Thyroid gland (tissue), 4 donors: ENCODE measurements at regions of chr5 and their contacts with region 1.

Region 1: GRCh38 chr5:32092938-32093812 is 80.9 kb downstream of the GOLPH3 start:
- DNase-seq: peak; percentile 66 to 70
- H3K4me3 ChIP-seq: no peak overlapping the region
- H3K27ac ChIP-seq: no peak overlapping the region
- H3K4me1 ChIP-seq: peaks cover 0 to 5% of the 10 kb centered on the region in 2 donors
- H3K27me3 ChIP-seq: no peaks in the 10 kb centered on the region
- CTCF ChIP-seq: peak; percentile 40 to 92 (median 76)
- POLR2A ChIP-seq: no peak

Region 2: DNA sequence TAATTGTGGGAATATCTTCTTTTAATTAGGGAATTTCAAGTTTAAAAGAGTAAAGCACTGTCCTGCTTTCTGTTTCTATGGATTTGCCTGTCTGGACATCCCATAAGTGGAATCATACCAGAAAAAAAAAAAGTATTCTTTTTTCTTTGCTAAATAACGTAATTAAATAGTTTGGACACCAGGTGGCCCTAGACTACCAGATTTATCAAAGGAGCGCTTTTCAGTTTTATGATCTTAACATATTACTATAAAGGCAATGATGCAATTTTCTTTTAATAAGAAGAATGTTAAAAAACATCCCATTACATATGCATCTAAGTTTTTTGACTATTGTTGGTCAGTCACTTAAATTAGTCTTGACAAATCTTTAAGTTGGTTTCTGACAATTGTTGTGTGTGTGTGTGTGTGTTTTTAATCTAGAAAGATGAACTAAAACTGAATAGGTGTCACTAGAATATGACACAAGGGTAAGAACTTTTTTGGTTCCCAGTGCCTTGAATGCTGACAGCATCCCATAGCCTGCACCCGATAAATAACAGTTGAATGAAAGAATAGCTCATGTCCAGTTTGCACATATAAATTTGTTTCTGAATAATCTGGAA is 511.6 kb before region 1 on chr5:
- intact Hi-C with region 1: loop called (anchors 5 kb)
- DNase-seq: no peak
- H3K4me3 ChIP-seq: no peak overlapping the region
- H3K27ac ChIP-seq: no peak overlapping the region
- H3K4me1 ChIP-seq: no peaks in the 10 kb centered on the region
- H3K27me3 ChIP-seq: no peaks in the 10 kb centered on the region
- CTCF ChIP-seq: peak in 3 of 6 experiments; percentile 56 to 67 (median 56)
- POLR2A ChIP-seq: no peak

Region 3: GRCh38 chr5:31825518-31826068 is 267.6 kb before region 1 on chr5:
- intact Hi-C with region 1: loop called (anchors 5 kb)
- DNase-seq: peak; percentile 47 to 54
- H3K4me3 ChIP-seq: no peak overlapping the region
- H3K27ac ChIP-seq: no peak overlapping the region
- H3K4me1 ChIP-seq: no peaks in the 10 kb centered on the region
- H3K27me3 ChIP-seq: no peaks in the 10 kb centered on the region
- CTCF ChIP-seq: peak; percentile 41 to 78 (median 70)
- POLR2A ChIP-seq: no peak